ENCODE measurements at regions of chr2 and their contacts with region 1.

Region 1: GRCh38 chr2:96769814-96770213 is 9.1 kb downstream of the CNNM4 start:
- DNase-seq: peak in 9 of 10 donors; percentile 31 to 92 (median 45)

Region 2: DNA sequence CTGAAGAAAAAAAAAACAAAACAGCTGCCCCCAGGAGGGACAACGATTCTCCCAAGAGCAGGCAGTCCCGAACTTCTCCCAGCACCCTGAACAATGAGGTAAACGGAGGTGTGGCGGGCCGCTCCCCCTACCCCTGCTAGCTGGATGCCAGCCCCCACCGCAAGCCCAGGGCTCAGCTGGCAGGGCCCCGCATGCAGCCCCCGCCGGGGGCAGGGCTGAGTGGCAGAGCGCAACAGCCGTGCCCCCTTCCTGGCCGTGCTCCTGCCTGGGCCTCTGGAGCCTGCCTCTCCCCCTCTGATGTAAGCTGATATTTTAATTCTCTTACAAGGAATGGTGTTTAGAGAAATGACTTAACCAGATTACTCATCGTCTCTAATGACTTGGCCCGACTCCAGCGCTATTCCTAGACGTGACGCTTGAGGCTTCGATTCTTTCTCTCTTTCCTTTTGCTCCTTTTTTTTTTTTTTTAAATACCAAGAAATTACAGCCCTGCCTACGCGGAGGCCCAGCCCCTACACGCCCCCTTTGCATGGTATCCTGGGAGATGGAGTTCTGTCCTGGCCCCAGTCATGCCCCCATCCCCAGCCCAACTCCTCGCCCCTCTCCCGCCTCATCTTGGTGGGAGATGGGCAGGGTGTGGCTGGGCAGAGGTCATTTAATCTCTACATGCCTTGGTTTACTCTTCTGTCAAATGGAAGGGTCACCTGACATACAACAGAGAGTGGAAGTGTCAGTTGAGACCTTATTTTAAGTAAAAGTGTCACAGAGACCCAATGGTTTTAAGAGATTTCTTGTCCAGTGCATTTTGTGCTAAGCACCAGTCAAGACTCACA is 237.7 kb before region 1 on chr2:
- intact Hi-C with region 1: no loop called
- DNase-seq: peak; percentile 8 to 95 (median 71)

Region 3: DNA sequence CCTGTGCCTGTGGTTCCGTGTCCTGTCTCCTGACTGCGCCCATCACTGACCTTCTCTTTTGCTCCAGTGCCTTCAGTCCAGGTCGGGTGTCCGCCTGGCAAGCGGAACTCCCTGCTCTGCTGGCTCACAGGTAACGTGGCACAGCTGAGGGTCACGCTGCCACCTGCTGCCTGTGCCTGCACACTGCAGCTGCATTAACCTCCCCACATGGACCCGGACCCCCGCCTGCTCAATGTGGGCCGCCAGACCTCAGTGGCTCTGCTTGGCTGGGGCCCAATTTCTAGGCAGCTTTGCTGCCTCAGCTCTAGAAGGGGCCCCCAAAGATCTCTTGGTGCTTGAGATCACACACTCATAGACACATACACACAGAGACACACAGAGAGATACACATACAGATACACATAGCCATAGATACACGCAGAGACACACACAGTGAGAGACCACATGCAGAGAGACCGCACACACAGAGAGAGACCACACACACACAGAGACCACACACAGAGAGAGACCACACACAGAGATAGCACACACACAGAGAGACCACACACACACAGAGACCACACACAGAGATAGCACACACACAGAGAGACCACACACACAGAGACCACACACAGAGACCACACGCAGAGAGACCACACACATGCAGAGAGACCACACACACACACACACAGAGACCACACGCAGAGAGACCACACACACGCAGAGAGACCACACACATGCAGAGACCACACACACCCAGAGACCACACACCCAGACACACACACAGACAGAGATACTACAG is 31.4 kb after region 1 on chr2:
- intact Hi-C with region 1: loop called (anchors 5 kb)
- DNase-seq: peak; percentile 48 to 96 (median 72)

Region 4: DNA sequence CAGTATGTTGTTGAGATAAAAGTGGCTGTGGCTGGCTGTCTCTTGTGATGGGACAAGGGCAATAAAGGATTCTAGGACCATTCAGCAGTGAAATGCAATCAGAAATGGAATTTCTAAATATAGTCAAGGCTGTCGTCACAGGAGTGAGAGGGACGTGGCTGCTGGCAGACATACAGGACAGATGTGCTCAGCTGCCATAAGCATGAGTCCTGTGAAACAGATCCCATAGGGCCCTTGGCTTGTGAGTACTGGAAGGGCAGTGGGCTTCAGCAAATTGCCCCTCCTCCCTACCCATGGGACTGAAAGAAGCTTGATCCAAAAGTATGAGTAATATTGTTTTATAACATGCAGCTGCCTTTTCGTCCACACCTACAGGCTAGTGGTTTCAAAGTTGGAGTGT is 42.1 kb after region 1 on chr2:
- intact Hi-C with region 1: no loop called
- DNase-seq: peak in 2 of 10 donors; percentile 61 to 70

Region 5: DNA sequence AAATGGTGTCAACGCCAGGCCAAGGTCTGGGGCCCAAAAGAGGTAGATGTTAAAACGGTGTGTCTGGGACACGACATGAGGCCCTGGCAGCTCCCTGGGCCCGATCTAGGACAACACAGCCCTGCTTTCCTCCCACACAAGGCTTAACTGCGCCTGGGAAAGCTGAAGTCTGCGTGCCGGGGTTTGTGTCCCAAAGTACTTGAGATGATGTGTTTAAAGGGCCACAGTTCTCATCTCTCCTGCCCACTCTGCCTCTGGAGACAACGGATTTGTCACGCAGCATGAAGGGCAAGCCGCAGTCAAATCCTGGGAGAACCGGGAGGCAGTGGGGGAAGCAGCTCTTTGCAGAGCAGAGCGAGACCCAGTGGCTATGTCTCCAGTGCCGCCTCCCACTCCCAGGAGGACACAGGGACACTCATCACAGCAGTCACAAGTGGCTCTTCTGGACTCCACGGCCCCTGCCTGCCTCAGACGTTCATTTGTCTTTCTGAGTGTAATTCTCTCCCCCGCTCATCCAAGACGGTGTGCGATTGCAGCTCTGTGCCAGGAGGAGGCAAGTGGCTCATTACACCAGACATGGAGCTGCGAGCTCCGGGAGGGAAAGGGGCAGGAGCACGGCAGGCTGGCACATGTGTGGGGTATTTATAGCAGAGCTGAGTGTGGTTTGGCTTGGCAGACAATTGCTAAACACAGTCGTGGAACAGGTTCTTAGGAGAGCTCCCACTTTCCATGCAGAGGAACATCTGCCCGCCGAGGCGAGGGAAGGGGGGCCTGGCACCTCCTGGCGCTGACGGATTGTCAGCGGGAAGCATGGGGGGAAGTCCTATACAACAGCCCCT is 157.8 kb after region 1 on chr2:
- intact Hi-C with region 1: no loop called
- DNase-seq: peak; percentile 56 to 97 (median 75)

Region 6: GRCh38 chr2:97095661-97096060 is 325.8 kb after region 1 on chr2:
- intact Hi-C with region 1: no loop called
- DNase-seq: no peak

Measured in posterior cingulate gyrus (tissue), 11 donors.